Psoas muscle (tissue), 8 donors: ENCODE measurements at regions of chr6 and their contacts with region 1.

Region 1: GRCh38 chr6:75437421-75437891 is 56.1 kb downstream of the FILIP1 start:
- DNase-seq: peak in 1 of 2 donors; percentile 36
- ATAC-seq: peak; percentile 79 to 93 (median 90)
- H3K4me3 ChIP-seq: no peak overlapping the region
- H3K27ac ChIP-seq: peak overlapping the region; percentile 77
- H3K4me1 ChIP-seq: peaks cover 41% of the 10 kb centered on the region
- H3K27me3 ChIP-seq: no peaks in the 10 kb centered on the region
- CTCF ChIP-seq: no peak

Region 2: GRCh38 chr6:75386053-75386770 is 51.2 kb before region 1 on chr6:
- intact Hi-C with region 1: loop called in 1 of 2 experiments (anchors 5 kb)
- DNase-seq: no peak
- ATAC-seq: peak; percentile 68 to 97 (median 88)
- H3K4me3 ChIP-seq: no peak overlapping the region
- H3K27ac ChIP-seq: peak overlapping the region; percentile 80
- H3K4me1 ChIP-seq: peaks cover 51% of the 10 kb centered on the region
- H3K27me3 ChIP-seq: no peaks in the 10 kb centered on the region
- CTCF ChIP-seq: no peak

Region 3: DNA sequence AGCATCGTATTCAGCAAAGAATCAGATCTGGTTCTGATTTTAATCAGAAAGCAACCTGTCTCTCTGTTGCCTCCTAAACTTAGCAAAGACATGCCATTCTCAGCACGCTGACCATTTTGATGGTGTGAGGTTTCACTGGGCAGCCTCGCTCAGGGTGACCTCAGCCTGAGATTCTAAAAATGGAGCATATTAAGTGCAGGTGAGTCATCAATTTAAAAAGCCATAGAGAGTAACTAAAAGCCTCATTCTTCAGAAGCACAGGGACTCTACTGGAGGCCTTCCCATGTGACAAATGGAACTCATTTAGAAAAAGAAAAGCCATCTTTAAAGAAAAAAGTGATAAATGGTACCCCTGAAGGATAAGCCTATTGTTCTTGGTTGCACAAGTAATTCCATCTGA is 35.2 kb before region 1 on chr6:
- intact Hi-C with region 1: no loop called
- DNase-seq: peak; percentile 32 to 79
- ATAC-seq: peak; percentile 93 to 97 (median 95)
- H3K4me3 ChIP-seq: peak overlapping the region; percentile 43
- H3K27ac ChIP-seq: peak overlapping the region; percentile 79
- H3K4me1 ChIP-seq: peaks cover 81% of the 10 kb centered on the region
- H3K27me3 ChIP-seq: no peaks in the 10 kb centered on the region
- CTCF ChIP-seq: no peak

Region 4: GRCh38 chr6:75478929-75479328 is 41.5 kb after region 1 on chr6:
- intact Hi-C with region 1: loop called in 1 of 2 experiments (anchors 5 kb)
- DNase-seq: no peak
- ATAC-seq: no peak
- H3K4me3 ChIP-seq: no peak overlapping the region
- H3K27ac ChIP-seq: peak overlapping the region; percentile 44
- H3K4me1 ChIP-seq: peaks cover 78% of the 10 kb centered on the region
- H3K27me3 ChIP-seq: no peaks in the 10 kb centered on the region
- CTCF ChIP-seq: no peak

Region 5: DNA sequence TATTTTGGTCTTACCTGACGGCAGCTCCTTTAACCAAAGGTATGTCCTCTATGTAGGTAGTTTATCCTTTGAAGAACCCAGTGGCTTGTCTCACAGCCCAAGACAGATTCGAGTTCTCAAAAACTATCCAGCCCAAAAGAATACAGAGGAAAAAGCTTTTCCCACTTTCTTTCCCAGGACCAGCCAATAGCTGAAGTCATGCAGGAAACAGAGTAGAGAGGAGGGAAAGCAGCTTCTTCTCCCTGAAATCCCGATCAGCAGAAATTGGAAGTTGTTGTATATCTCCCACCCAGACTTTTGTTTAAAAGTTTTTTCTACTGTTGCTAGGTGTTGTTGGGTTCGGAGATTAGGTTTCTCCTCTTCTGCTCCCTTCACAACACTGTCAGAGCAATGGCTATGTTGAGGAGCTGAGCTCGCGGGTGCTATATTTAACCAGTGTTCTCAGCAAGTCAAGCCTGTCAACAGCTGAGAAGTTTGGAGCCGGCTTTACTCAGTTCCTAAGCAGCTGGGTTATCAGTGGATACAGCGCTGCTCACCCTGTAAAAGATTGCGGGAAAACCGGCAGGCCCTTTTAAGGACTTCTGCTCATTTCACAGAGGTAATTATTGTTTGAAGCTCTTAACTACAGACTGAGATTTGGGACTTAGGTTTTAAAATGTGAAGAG is 56.1 kb after region 1 on chr6 and contains the start of gene FILIP1:
- intact Hi-C with region 1: loop called in 1 of 2 experiments (anchors 5 kb)
- DNase-seq: peak; percentile 43 to 81
- ATAC-seq: peak; percentile 92 to 98 (median 94)
- H3K4me3 ChIP-seq: peak within 1 kb of the TSS; percentile 80
- H3K27ac ChIP-seq: peak within 1 kb of the TSS; percentile 97
- H3K4me1 ChIP-seq: peaks cover 46% of the 10 kb centered on the region
- H3K27me3 ChIP-seq: no peaks in the 10 kb centered on the region
- CTCF ChIP-seq: no peak
- total RNA-seq, gene FILIP1: 71.5 to 129 (median 87.1) TPM

Region 6: GRCh38 chr6:75952128-75952527 is 514.7 kb after region 1 on chr6:
- intact Hi-C with region 1: no loop called
- DNase-seq: no peak
- ATAC-seq: no peak
- H3K4me3 ChIP-seq: no peak overlapping the region
- H3K27ac ChIP-seq: no peak overlapping the region
- H3K4me1 ChIP-seq: no peaks in the 10 kb centered on the region
- H3K27me3 ChIP-seq: no peaks in the 10 kb centered on the region
- CTCF ChIP-seq: no peak